ENCODE measurements at regions of chrX and their contacts with region 1.

Region 1: GRCh38 chrX:103686199-103687072 is at the start of gene MORF4L2:
- DNase-seq: peak; percentile 42 to 96 (median 89)
- ATAC-seq: peak; percentile 90
- H3K4me3 ChIP-seq: peak within 1 kb of the TSS; percentile 83
- H3K4me3 Mint-ChIP-seq: peak within 1 kb of the TSS in 6 of 10 donors; percentile 69 to 91 (median 82)
- H3K27ac ChIP-seq: peak within 1 kb of the TSS; percentile 94
- H3K27ac Mint-ChIP-seq: peak within 1 kb of the TSS in 5 of 9 donors; percentile 77 to 92 (median 81)
- H3K4me1 ChIP-seq: peaks cover 4 to 13% of the 10 kb centered on the region in 2 donors
- H3K4me1 Mint-ChIP-seq: peaks cover 0 to 23% (median 10%) of the 10 kb centered on the region in 7 donors
- H3K27me3 ChIP-seq: no peaks in the 10 kb centered on the region
- H3K27me3 Mint-ChIP-seq: no peaks in the 10 kb centered on the region
- total RNA-seq, gene MORF4L2: 103 to 177 (median 143) TPM

Region 2: GRCh38 chrX:103214870-103215424 is 471.5 kb before region 1 on chrX and contains the start of gene BEX4:
- CTCF ChIA-PET with region 1: no interaction called
- POLR2A ChIA-PET with region 1: no interaction called
- intact Hi-C with region 1: loop called (anchors 1 to 5 kb)
- DNase-seq: peak; percentile 62 to 84 (median 78)
- ATAC-seq: peak; percentile 97
- H3K4me3 ChIP-seq: peak within 1 kb of the TSS; percentile 61
- H3K4me3 Mint-ChIP-seq: peak within 1 kb of the TSS; percentile 72 to 91 (median 84)
- H3K27ac ChIP-seq: peak within 1 kb of the TSS; percentile 97
- H3K27ac Mint-ChIP-seq: peak within 1 kb of the TSS; percentile 75 to 96 (median 91)
- H3K4me1 ChIP-seq: no peaks in the 10 kb centered on the region
- H3K4me1 Mint-ChIP-seq: peaks cover 3 to 20% (median 12%) of the 10 kb centered on the region in 7 donors
- H3K27me3 ChIP-seq: no peaks in the 10 kb centered on the region
- H3K27me3 Mint-ChIP-seq: peaks cover 0 to 9% (median 0%) of the 10 kb centered on the region in 5 donors
- total RNA-seq, gene BEX4: 8.8 to 51.2 (median 41.1) TPM

Region 3: DNA sequence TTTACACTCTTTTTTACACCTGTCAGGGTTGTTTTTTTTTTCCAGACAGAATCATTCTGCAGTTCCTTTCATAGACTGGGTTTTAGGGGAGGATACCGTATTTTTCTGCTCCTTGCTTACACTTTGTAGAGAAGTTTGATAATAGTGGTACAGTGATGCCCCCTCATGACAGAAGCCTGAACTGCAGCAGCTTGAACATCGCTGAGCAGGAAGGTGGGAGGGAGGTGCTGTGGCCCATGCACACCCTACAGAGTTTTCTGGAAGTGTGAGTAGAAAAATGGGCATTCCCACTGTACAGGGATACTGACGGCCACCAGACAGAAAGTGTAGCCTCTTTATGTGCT is 221.7 kb before region 1 on chrX:
- CTCF ChIA-PET with region 1: interaction called, 3 read pairs
- POLR2A ChIA-PET with region 1: no interaction called
- intact Hi-C with region 1: loop called (anchors 2 kb)
- DNase-seq: peak; percentile 29 to 82 (median 72)
- ATAC-seq: peak; percentile 98
- H3K4me3 ChIP-seq: peak overlapping the region; percentile 70
- H3K4me3 Mint-ChIP-seq: peak overlapping the region; percentile 92 to 98 (median 94)
- H3K27ac ChIP-seq: peak overlapping the region; percentile 57
- H3K27ac Mint-ChIP-seq: peak overlapping the region; percentile 7 to 95 (median 91)
- H3K4me1 ChIP-seq: peaks cover 0 to 4% of the 10 kb centered on the region in 2 donors
- H3K4me1 Mint-ChIP-seq: peaks cover 5 to 45% (median 23%) of the 10 kb centered on the region in 7 donors
- H3K27me3 ChIP-seq: no peaks in the 10 kb centered on the region
- H3K27me3 Mint-ChIP-seq: peaks cover 0 to 9% (median 0%) of the 10 kb centered on the region in 5 donors

Region 4: DNA sequence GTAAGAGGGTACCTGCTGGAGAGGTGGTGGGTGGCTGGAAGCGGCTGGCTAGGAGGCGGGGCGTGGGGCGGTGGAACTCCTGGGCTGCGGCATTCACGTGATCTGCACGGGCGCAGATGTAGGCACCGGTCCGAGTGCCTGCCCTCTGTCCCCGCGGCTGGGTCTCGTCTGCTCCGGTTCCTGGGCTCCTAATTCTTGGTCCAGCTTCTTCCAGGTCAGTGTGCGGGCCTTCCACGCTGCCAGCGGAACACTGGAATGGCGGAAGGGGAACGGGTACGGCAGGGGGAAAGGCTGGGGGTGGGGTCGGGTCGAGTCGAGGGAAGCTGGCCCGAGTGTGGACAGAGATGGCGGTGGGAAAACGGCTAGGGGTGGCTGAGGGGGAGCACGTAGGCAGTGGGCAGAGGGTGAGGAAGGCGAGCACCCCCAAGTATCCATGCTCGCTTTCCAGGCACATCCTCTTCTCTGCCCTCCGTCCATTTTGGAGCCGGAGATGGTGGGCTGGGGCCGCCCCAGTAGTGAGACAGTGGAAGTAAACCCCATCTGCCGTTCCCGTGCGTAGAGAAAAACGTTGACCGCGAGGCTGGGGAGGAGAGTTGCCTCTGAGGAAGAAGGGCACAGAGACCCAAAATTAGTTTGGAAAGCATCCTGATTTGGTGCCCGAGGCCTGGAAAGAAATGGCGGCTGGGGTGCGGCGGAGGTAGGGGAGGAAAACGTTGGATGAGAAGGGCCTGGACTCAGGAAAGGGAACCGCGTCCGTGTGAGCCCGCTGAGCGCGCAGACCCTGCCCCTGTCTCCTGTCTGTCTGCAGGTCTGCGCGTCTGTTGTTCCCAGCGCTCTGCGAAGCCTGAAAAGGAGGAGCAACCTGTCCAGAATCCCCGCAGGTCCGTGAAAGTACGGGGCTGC is 100.8 kb before region 1 on chrX and contains the start of gene TCEAL4:
- CTCF ChIA-PET with region 1: no interaction called
- POLR2A ChIA-PET with region 1: no interaction called
- intact Hi-C with region 1: loop called in 1 of 2 experiments (anchors 1 kb)
- DNase-seq: peak; percentile 1 to 21 (median 10)
- ATAC-seq: peak; percentile 83
- H3K4me3 ChIP-seq: peak within 1 kb of the TSS; percentile 59
- H3K4me3 Mint-ChIP-seq: peak within 1 kb of the TSS; percentile 84 to 95 (median 88)
- H3K27ac ChIP-seq: peak within 1 kb of the TSS; percentile 64
- H3K27ac Mint-ChIP-seq: peak within 1 kb of the TSS in 8 of 9 donors; percentile 21 to 94 (median 60)
- H3K4me1 ChIP-seq: no peaks in the 10 kb centered on the region
- H3K4me1 Mint-ChIP-seq: peaks cover 4 to 24% (median 14%) of the 10 kb centered on the region in 7 donors
- H3K27me3 ChIP-seq: no peaks in the 10 kb centered on the region
- H3K27me3 Mint-ChIP-seq: peaks cover 0 to 28% (median 0%) of the 10 kb centered on the region in 5 donors
- total RNA-seq, gene TCEAL4: 1.8 to 11.7 (median 9.3) TPM

Region 5: GRCh38 chrX:103711533-103712369 is 25.3 kb after region 1 on chrX:
- CTCF ChIA-PET with region 1: no interaction called
- POLR2A ChIA-PET with region 1: no interaction called
- intact Hi-C with region 1: loop called in 1 of 2 experiments (anchors 2 kb)
- DNase-seq: peak in 7 of 9 donors; percentile 15 to 46 (median 40)
- ATAC-seq: peak; percentile 76
- H3K4me3 ChIP-seq: no peak overlapping the region
- H3K4me3 Mint-ChIP-seq: no peak overlapping the region
- H3K27ac ChIP-seq: no peak overlapping the region
- H3K27ac Mint-ChIP-seq: no peak overlapping the region
- H3K4me1 ChIP-seq: no peaks in the 10 kb centered on the region
- H3K4me1 Mint-ChIP-seq: peaks cover 0 to 3% (median 0%) of the 10 kb centered on the region in 7 donors
- H3K27me3 ChIP-seq: no peaks in the 10 kb centered on the region
- H3K27me3 Mint-ChIP-seq: peaks cover 0 to 3% (median 0%) of the 10 kb centered on the region in 5 donors

Region 6: GRCh38 chrX:103918581-103919269 is 232.3 kb after region 1 on chrX:
- CTCF ChIA-PET with region 1: no interaction called
- POLR2A ChIA-PET with region 1: interaction called, 3 read pairs
- intact Hi-C with region 1: loop called in 1 of 2 experiments (anchors 1 kb)
- DNase-seq: peak; percentile 19 to 64 (median 61)
- ATAC-seq: peak; percentile 86
- H3K4me3 ChIP-seq: peak overlapping the region; percentile 70
- H3K4me3 Mint-ChIP-seq: peak overlapping the region; percentile 89 to 97 (median 92)
- H3K27ac ChIP-seq: peak overlapping the region; percentile 74
- H3K27ac Mint-ChIP-seq: peak overlapping the region; percentile 79 to 95 (median 89)
- H3K4me1 ChIP-seq: peaks cover 3 to 8% of the 10 kb centered on the region in 2 donors
- H3K4me1 Mint-ChIP-seq: peaks cover 9 to 29% (median 18%) of the 10 kb centered on the region in 7 donors
- H3K27me3 ChIP-seq: no peaks in the 10 kb centered on the region
- H3K27me3 Mint-ChIP-seq: no peaks in the 10 kb centered on the region